A549 (cell line): ENCODE measurements at regions of chr2 and their contacts with region 1.

Region 1: DNA sequence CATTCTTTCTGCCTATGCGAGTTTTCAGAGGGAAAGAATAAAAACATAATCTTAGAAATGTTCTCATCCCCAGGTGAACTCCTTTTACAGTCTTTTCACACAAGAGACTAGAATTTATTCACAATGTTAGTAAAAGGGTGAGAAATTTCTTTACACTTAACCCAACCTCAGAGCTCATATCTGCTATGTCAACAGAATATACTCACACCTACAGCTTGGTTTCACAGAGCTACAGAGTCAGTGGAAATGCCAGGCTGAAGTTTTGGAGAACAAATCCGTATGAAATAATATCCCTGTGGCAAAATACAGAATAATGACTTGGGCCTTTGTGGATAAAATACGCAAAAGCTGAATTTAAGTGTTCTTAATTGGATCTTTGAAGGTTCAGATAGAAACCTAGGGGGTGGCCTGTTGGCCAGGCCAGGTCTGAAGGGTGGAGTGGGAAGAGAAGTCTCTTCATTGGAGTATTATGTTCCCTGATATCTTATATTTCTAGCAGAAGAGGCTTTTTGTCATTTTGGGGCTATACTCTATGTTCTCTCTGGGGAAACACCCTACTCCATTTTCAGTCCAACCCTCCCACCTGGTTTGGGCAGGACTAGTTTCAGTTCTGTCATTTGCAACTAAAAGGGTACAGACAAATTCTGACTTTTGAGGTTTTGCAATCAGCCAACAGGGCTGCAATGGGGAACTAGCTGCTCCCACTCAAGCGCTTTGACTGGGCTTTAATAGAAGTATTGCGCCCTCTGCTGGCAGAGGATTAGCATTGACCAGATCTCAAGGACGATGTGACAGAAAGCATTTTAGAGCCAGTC is 25.7 kb downstream of the FBXO48 start:
- DNase-seq: peak; percentile 48 to 88
- ATAC-seq: peak; percentile 94 to 98
- H3K4me3 ChIP-seq: no peak overlapping the region
- H3K27ac ChIP-seq: no peak overlapping the region
- H3K4me1 ChIP-seq: no peaks in the 10 kb centered on the region
- CTCF ChIP-seq: peak; percentile 98
- EP300 ChIP-seq: no peak
- POLR2A ChIP-seq: no peak
- RAD21 ChIP-seq: peak; percentile 84 to 92

Region 2: DNA sequence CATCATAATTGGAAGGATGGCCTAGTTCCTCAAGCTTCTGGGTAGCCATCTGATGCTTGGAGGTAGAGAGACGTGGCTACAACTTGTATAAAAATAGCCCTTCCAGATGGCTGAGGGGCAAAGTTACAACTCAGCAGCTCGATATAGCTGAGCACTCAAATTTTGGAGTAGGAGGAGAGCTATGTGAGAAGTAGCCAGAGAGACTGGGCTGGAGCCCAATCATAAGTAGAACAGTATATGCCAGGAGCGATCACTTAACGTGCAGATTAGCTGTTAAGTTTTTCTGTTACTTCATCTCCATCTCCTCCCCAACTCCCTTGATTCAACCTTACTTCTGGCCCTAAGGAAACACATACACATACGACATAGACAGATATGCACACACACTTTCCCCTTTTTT is 150.5 kb before region 1 on chr2:
- CTCF ChIA-PET with region 1: interaction called, 12 read pairs
- POLR2A ChIA-PET with region 1: no interaction called
- DNase-seq: no peak
- ATAC-seq: no peak
- H3K4me3 ChIP-seq: no peak overlapping the region
- H3K27ac ChIP-seq: no peak overlapping the region
- H3K4me1 ChIP-seq: no peaks in the 10 kb centered on the region
- CTCF ChIP-seq: no peak
- EP300 ChIP-seq: no peak
- POLR2A ChIP-seq: no peak
- RAD21 ChIP-seq: no peak

Region 3: DNA sequence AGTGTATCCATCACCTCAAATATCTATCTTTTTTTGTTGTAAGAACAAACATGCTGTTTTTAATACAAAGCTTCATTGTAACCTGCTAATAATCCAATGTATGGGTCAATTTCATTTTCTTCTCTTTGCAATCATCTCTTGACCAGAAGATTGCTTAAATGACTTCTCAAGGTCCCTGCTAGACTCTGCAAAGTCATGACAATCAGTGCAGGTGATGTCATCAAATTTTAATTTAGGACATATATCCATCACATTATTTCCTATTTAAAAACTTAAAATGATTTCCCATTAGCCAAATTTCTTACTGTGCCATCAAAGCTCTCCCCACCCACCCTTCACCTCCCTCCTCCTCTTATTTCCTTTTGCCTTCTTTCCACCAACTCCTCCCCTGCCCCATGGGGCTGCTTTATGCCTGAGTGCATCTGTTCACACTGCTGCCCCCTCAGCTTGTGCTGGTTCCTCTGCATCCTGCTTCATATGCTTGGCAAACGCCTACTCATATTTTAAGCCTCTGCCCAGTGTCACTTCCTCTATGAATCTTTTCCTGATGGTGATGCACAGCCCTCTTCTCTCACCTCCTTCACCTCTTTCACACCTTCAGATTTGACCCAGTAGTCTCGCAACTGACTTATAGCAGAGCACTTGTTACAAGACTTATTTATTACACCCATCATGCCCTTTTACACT is 56.0 kb before region 1 on chr2:
- CTCF ChIA-PET with region 1: interaction called, 24 read pairs
- POLR2A ChIA-PET with region 1: no interaction called
- DNase-seq: no peak
- ATAC-seq: no peak
- H3K4me3 ChIP-seq: no peak overlapping the region
- H3K27ac ChIP-seq: no peak overlapping the region
- H3K4me1 ChIP-seq: no peaks in the 10 kb centered on the region
- CTCF ChIP-seq: no peak
- EP300 ChIP-seq: no peak
- POLR2A ChIP-seq: no peak
- RAD21 ChIP-seq: no peak

Region 4: DNA sequence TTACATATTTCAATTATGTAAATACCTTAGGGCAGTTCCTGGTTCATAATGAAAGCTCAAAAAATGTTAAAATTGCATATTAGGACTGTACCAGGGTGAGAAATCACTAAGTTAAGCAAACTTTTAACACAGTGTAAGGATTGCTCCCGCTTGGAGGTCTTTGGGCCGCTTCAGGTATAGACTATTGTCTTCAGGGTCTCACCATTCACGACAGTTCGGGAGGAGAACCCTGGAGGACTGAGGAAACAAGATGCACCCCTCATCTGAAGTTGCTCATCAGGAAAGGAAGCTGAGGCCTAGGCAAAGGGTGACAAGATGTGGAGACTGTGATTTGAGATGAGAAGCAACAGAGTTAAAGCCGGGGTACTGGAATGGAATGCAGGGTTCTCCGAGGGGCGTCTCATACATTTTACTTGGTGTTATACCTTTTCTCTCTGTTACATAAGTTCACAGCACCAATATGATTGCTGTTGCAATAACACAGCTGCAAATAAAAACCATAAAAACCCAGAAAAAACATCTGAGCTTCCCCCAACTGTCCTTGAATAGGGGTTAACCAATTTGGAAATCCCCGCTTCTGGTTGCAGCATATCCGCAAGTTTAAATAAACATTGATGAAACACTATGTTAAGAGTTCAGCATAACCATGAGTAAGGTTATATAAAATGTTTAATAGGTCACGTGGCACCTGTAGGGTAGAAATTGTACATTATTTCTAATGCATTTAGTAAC is 14.4 kb before region 1 on chr2:
- CTCF ChIA-PET with region 1: interaction called, 83 read pairs
- POLR2A ChIA-PET with region 1: no interaction called
- DNase-seq: peak in 1 of 2 experiments; percentile 37
- ATAC-seq: peak in 1 of 2 experiments; percentile 54; a peak in 3 of 6 replicates
- H3K4me3 ChIP-seq: no peak overlapping the region
- H3K27ac ChIP-seq: peak overlapping the region in 1 of 2 experiments; percentile 49; a peak in 2 of 6 replicates
- H3K4me1 ChIP-seq: peaks cover 16% of the 10 kb centered on the region; the same call in 2 of the 3 replicates
- CTCF ChIP-seq: no peak
- EP300 ChIP-seq: peak; percentile 18 to 60; a peak in 1 of 5 replicates
- POLR2A ChIP-seq: no peak
- RAD21 ChIP-seq: no peak

Region 5: GRCh38 chr2:68467077-68467960 is 25.9 kb after region 1 on chr2 and contains the starts of genes APLF and FBXO48:
- CTCF ChIA-PET with region 1: interaction called, 41 read pairs
- POLR2A ChIA-PET with region 1: no interaction called
- DNase-seq: peak; percentile 97 to 99
- ATAC-seq: peak; percentile 95 to 99
- H3K4me3 ChIP-seq: peak within 1 kb of the TSS; percentile 78
- H3K27ac ChIP-seq: peak within 1 kb of the TSS; percentile 85 to 92
- H3K4me1 ChIP-seq: peaks cover 22% of the 10 kb centered on the region
- CTCF ChIP-seq: no peak
- EP300 ChIP-seq: no peak
- POLR2A ChIP-seq: peak; percentile 63
- RAD21 ChIP-seq: no peak
- polyA plus RNA-seq, gene APLF: 2.1 and 2.8 TPM in 2 replicates
- polyA plus RNA-seq, gene FBXO48: 1.4 and 2.1 TPM in 2 replicates

Region 6: DNA sequence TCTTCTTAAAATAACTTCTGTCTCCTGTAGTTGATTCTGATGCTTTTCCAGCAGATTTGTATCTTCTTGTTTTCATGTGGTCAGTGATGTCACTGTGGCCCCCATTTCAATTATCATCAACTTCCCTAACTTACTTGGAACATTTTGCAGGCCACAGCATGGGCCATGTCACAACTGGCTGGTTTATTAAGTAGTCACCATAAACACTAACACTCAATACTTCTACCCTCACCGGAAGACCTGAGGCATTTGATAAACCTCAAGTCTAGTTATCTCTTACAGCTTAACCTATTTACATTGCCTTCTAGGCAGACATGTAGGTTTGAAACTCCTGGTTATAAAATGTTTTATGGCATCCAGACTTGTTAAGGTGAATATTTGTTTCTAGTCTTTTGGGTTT is 164.6 kb after region 1 on chr2:
- CTCF ChIA-PET with region 1: no interaction called
- POLR2A ChIA-PET with region 1: no interaction called
- DNase-seq: no peak
- ATAC-seq: no peak
- H3K4me3 ChIP-seq: no peak overlapping the region
- H3K27ac ChIP-seq: no peak overlapping the region
- H3K4me1 ChIP-seq: no peaks in the 10 kb centered on the region
- CTCF ChIP-seq: no peak
- EP300 ChIP-seq: no peak
- POLR2A ChIP-seq: no peak
- RAD21 ChIP-seq: no peak